Left ventricle myocardium superior (tissue), 1 donor: ENCODE measurements at regions of chr12 and their contacts with region 1.

Region 1: DNA sequence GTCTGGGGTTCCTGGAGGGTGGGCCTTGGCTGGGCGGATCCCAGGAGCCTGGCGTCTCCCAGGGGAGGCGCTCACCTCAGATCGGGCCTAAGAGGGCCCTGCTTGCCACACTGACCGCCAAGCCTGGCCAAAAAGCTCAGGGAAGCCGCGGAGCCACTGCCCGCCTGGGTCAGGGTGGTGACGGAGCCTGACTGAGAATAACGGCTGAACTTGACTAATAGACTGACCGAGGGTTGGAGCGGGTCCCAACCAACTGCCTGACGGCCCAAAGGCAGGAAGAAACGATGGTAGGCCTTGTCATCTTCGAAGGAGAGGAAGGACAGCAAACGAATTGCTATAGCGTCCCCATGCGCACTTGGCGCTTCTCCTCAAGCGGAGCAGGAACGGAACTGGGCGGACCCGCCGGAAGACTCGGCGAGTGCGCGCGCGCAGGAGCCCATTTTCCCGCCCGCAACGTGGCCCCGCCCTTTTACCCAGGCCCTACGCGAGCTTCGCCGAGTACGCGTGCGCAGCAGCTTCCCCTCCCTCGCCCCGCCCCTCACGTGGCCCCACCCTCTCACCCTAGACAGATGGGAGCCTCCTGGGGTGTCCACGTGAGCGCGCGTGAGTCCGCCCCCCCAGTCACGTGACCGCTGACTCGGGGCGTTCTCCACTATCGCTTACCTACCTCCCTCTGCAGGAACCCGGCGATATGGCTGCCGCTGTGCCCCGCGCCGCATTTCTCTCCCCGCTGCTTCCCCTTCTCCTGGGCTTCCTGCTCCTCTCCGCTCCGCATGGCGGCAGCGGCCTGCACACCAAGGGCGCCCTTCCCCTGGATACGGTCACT is at the starts of genes ERP29 and TMEM116:
- DNase-seq: peak; percentile 100
- ATAC-seq: peak; percentile 93
- total RNA-seq, gene ERP29: 55.0 TPM
- total RNA-seq, gene TMEM116: 49.3 TPM

Region 2: GRCh38 chr12:111720457-111720856 is 292.5 kb before region 1 on chr12:
- intact Hi-C with region 1: no loop called
- DNase-seq: no peak
- ATAC-seq: no peak

Region 3: DNA sequence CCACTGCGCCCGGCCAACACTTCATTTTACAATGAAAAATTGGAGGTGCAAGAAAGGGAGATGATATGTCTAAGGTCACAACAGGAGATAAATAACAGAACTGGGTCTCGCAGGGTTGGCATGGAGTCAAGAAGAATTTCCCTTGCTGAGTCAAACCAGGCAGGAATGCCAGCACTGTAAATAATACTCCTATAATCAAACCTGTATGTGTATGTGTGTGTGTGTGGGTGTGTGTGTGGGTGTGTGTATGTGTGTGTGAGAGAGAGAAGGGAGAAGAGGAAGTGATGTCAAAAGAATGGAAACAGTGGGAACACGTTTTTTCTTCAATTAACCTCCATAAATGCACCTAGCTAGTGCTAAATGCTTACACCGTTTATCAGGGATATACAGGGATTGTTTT is 70.4 kb before region 1 on chr12:
- intact Hi-C with region 1: loop called (anchors 10 kb)
- DNase-seq: no peak
- ATAC-seq: no peak